MCF 10A (cell line): ENCODE measurements at regions of chr20 and their contacts with region 1.

Region 1: GRCh38 chr20:47272893-47273590 is 83.5 kb downstream of the ZMYND8 start:
- DNase-seq: peak; percentile 89
- H3K4me3 Mint-ChIP-seq: peak overlapping the region; percentile 52
- H3K27ac Mint-ChIP-seq: peak overlapping the region; percentile 99
- H3K4me1 Mint-ChIP-seq: peaks cover 37% of the 10 kb centered on the region
- H3K27me3 Mint-ChIP-seq: no peaks in the 10 kb centered on the region
- CTCF ChIP-seq: peak; percentile 66

Region 2: DNA sequence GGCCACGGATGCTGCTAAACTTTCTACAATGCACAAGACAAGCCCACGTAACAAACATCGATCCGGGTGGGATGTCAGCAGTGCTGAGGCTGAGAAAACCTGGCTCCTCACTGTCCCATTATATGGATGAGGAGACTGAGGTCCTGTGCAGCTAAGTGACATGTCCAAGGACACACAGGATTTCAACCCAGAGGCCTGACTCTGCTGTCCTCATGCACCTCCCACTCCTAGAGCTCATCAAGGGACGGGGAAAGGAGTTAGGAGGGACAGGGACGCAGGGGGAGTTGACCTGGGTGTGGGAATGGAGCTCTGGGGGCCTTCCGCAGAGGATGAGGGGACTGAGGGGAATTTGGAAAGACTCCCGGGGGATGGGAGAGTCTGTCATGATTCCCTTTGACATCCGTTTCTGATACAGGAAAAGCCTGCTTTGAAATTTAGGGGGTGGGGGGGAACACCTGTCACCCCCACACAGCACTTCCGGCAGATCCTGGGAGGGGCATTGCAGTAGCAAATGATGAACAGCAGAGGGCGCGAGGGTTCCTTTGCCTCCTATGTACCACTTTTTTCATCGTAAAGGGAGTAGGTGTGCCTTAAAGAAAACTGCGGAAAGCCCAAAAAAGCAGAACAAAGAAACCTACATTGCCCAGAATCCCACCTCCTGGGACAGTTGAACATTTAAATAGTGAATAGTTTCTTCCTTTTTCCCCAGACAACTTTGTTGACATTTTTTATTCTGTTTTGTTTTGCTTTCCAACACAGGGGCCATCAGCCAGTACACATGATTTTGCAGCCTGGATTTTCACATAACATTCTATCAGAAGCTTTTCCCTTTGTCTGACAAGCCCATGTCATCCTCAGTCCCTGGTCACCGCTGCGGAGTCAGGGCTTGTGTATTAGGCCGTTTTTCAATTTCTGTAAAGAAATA is 515.0 kb before region 1 on chr20:
- CTCF ChIA-PET with region 1: interaction called, 53 read pairs
- POLR2A ChIA-PET with region 1: no interaction called
- intact Hi-C with region 1: no loop called
- DNase-seq: peak; percentile 72
- H3K4me3 Mint-ChIP-seq: no peak overlapping the region
- H3K27ac Mint-ChIP-seq: no peak overlapping the region
- H3K4me1 Mint-ChIP-seq: peaks cover under 1% of the 10 kb centered on the region
- H3K27me3 Mint-ChIP-seq: peaks cover 27% of the 10 kb centered on the region
- CTCF ChIP-seq: peak; percentile 93

Region 3: GRCh38 chr20:47189060-47189459 is 84.0 kb before region 1 on chr20:
- CTCF ChIA-PET with region 1: no interaction called
- POLR2A ChIA-PET with region 1: no interaction called
- intact Hi-C with region 1: no loop called
- DNase-seq: no peak
- H3K4me3 Mint-ChIP-seq: no peak overlapping the region
- H3K27ac Mint-ChIP-seq: no peak overlapping the region
- H3K4me1 Mint-ChIP-seq: no peaks in the 10 kb centered on the region
- H3K27me3 Mint-ChIP-seq: no peaks in the 10 kb centered on the region
- CTCF ChIP-seq: no peak

Region 4: GRCh38 chr20:47258745-47259695 is 14.0 kb before region 1 on chr20:
- CTCF ChIA-PET with region 1: interaction called, 14 read pairs
- POLR2A ChIA-PET with region 1: interaction called, 8 read pairs
- intact Hi-C with region 1: no loop called
- DNase-seq: peak; percentile 73
- H3K4me3 Mint-ChIP-seq: peak overlapping the region; percentile 19
- H3K27ac Mint-ChIP-seq: peak overlapping the region; percentile 86
- H3K4me1 Mint-ChIP-seq: peaks cover 37% of the 10 kb centered on the region
- H3K27me3 Mint-ChIP-seq: no peaks in the 10 kb centered on the region
- CTCF ChIP-seq: no peak

Region 5: GRCh38 chr20:47317127-47317895 is 44.3 kb after region 1 on chr20:
- CTCF ChIA-PET with region 1: interaction called, 16 read pairs
- POLR2A ChIA-PET with region 1: interaction called, 85 read pairs
- intact Hi-C with region 1: loop called (anchors 2 kb)
- DNase-seq: peak; percentile 100
- H3K4me3 Mint-ChIP-seq: peak overlapping the region; percentile 65
- H3K27ac Mint-ChIP-seq: peak overlapping the region; percentile 94
- H3K4me1 Mint-ChIP-seq: peaks cover 65% of the 10 kb centered on the region
- H3K27me3 Mint-ChIP-seq: no peaks in the 10 kb centered on the region
- CTCF ChIP-seq: no peak

Region 6: DNA sequence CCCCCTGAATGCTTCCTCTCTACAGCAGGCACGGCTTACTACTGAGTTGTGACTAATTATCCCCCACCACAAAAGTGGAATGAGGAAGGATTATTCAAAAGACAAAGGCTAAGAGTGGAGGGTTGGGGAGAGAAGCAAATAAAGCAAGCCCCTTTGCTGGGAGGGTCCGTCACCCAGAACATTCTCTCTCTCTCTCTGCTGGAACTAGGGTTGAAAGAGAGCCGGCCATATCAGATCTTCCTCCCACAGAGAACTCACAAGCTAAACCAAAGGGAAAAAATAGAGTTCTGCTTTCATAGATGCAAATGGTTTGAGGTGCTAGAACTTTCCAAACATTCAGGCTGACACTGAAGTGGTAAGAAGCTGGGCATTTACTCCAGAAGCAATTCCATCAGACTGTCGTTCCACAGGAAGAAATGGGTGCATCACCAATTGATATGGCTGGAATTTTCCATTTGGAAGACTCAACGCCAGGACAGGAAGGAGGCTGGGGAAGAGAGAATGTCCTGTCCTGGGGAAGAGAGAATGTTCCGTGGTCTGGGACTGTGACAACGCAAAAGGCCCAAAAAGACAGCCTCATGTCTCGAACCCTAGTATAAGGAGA is 75.6 kb after region 1 on chr20:
- CTCF ChIA-PET with region 1: interaction called, 27 read pairs
- POLR2A ChIA-PET with region 1: interaction called, 288 read pairs
- intact Hi-C with region 1: no loop called
- DNase-seq: no peak
- H3K4me3 Mint-ChIP-seq: no peak overlapping the region
- H3K27ac Mint-ChIP-seq: no peak overlapping the region
- H3K4me1 Mint-ChIP-seq: peaks cover 23% of the 10 kb centered on the region
- H3K27me3 Mint-ChIP-seq: no peaks in the 10 kb centered on the region
- CTCF ChIP-seq: no peak

Region 7: GRCh38 chr20:47392015-47392720 is 119.1 kb after region 1 on chr20:
- CTCF ChIA-PET with region 1: interaction called, 581 read pairs
- POLR2A ChIA-PET with region 1: interaction called, 3 read pairs
- intact Hi-C with region 1: no loop called
- DNase-seq: peak; percentile 97
- H3K4me3 Mint-ChIP-seq: peak overlapping the region; percentile 67
- H3K27ac Mint-ChIP-seq: peak overlapping the region; percentile 98
- H3K4me1 Mint-ChIP-seq: peaks cover 22% of the 10 kb centered on the region
- H3K27me3 Mint-ChIP-seq: no peaks in the 10 kb centered on the region
- CTCF ChIP-seq: no peak

Region 8: GRCh38 chr20:47501483-47502270 is 228.6 kb after region 1 on chr20 and contains the start of gene NCOA3:
- CTCF ChIA-PET with region 1: interaction called, 6 read pairs
- POLR2A ChIA-PET with region 1: interaction called, 28 read pairs
- intact Hi-C with region 1: loop called (anchors 5 kb)
- DNase-seq: peak; percentile 95
- H3K4me3 Mint-ChIP-seq: peak within 1 kb of the TSS; percentile 94
- H3K27ac Mint-ChIP-seq: peak within 1 kb of the TSS; percentile 95
- H3K4me1 Mint-ChIP-seq: peaks cover 24% of the 10 kb centered on the region
- H3K27me3 Mint-ChIP-seq: no peaks in the 10 kb centered on the region
- CTCF ChIP-seq: peak; percentile 41
- total RNA-seq, gene NCOA3: 61.4 and 68.6 TPM in 2 replicates